WTC11 (cell line): ENCODE measurements at regions of chr4 and their contacts with region 1.

Region 1: DNA sequence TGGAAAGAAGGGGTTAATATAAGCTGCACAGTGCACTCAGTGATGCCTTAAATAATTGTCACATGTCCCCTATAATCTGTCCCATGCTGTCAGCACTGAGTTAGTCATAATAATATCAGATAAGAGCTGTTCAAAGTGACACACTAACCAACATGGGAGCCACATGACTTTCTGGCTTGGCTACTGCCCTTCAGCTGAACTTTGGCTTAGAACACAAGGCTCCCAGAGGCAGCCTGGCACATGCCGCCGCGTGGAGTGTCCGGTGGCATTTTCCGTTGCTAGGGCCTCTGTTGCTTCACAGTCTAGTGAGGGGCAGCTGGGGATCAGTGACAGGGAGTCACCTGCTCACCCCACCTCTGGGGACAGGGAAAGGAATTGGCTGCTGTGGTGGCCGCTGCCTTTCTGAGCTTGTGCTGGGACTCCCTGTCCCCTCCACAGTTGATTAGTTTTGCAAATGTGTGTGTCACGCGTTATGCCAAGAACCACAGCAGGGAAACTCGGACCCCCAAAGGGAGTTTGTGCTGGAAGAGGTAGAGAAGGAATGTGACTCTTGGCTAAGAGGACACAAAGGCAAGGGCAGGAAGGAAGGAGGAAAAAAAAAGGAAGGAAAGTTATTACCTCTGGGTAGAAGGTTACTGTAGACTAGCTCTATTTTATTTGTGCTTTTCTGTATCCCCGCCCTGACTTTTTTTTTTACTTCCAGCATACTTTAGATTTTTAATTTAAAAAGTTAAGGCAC is 41.1 kb upstream of the PPARGC1A start:
- DNase-seq: no peak
- ATAC-seq: no peak; the same call in 1 of the 2 replicates
- H3K4me3 Mint-ChIP-seq: 0 out of 2 replicates have a peak overlapping the region, but pooled peaks have one; percentile 9
- H3K27ac Mint-ChIP-seq: peak overlapping the region; percentile 52
- H3K4me1 Mint-ChIP-seq: peaks cover 69% of the 10 kb centered on the region
- H3K27me3 Mint-ChIP-seq: peaks cover 3% of the 10 kb centered on the region; the same call in 1 of the 2 replicates
- CTCF ChIP-seq: no peak

Region 2: DNA sequence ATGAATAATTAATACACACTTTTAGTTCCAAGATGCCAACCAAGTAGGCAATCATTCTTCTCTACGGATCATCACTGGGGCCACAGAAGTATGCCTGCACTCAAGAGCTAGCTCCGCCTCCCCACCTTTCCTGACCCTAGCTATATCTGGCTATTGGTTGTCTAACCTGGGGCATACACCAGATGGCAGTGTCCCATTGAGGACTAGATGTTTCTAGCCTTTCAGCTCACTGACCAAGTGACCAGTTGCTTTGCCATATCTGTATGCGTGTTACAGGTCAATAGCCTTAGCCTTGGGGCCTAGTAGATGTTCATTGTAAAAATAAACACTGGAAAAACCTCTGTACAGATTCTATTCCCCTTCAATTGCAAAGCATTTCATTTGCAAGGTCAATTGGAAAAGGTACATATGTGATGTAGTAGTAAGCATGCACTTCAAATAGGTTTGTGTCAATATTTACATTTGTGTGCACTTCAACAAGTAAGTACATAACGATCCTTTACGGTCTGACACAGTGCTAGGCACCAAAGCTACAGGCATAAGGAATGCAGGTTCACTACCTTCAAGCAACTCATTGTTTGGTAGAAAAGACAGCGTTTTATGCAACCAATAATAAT is 562.7 kb before region 1 on chr4:
- CTCF ChIA-PET with region 1: interaction called, 16 read pairs
- POLR2A ChIA-PET with region 1: no interaction called
- DNase-seq: peak; percentile 72
- ATAC-seq: peak; percentile 97
- H3K4me3 Mint-ChIP-seq: no peak overlapping the region
- H3K27ac Mint-ChIP-seq: no peak overlapping the region
- H3K4me1 Mint-ChIP-seq: peaks cover 16% of the 10 kb centered on the region
- H3K27me3 Mint-ChIP-seq: peaks cover 23% of the 10 kb centered on the region
- CTCF ChIP-seq: peak; percentile 56

Region 3: DNA sequence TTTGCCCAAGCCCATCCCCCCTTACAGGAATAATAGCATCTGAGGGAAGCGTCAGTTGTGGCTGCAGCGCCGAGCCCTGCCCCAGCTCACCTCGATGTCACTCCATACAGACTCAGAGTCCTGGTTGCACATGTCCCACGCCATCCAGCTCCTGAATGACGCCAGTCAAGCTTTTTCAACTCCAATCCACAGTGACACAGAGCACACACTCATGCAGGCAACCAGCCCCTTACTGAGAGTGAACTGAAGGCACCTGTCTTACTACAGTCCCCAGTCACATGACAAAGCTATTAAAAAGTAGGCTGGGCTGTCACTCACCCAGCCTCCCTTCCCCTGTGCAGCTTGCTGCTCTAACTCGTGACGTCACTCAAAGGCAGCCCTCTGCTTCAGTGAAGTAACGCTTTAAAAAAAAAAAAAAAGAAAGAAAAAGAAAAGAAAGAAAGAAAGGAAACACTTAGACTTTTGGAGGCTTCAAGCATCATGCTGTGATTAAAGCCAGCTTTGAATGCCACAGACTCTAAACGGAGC is 41.0 kb before region 1 on chr4 and contains the start of gene PPARGC1A:
- CTCF ChIA-PET with region 1: interaction called, 24 read pairs
- POLR2A ChIA-PET with region 1: no interaction called
- DNase-seq: no peak
- ATAC-seq: peak; percentile 40
- H3K4me3 Mint-ChIP-seq: peak within 1 kb of the TSS; percentile 53
- H3K27ac Mint-ChIP-seq: no peak within 1 kb of the TSS
- H3K4me1 Mint-ChIP-seq: peaks cover 64% of the 10 kb centered on the region
- H3K27me3 Mint-ChIP-seq: peaks cover 15% of the 10 kb centered on the region
- CTCF ChIP-seq: no peak
- total RNA-seq, gene PPARGC1A: 1.9 to 2.9 TPM (median 2.0 TPM) in 3 replicates

Region 4: GRCh38 chr4:23946299-23946698 is 15.4 kb after region 1 on chr4:
- CTCF ChIA-PET with region 1: interaction called, 17 read pairs
- POLR2A ChIA-PET with region 1: no interaction called
- DNase-seq: no peak
- ATAC-seq: no peak
- H3K4me3 Mint-ChIP-seq: no peak overlapping the region
- H3K27ac Mint-ChIP-seq: no peak overlapping the region
- H3K4me1 Mint-ChIP-seq: peaks cover 26% of the 10 kb centered on the region
- H3K27me3 Mint-ChIP-seq: no peaks in the 10 kb centered on the region
- CTCF ChIP-seq: no peak

Region 5: DNA sequence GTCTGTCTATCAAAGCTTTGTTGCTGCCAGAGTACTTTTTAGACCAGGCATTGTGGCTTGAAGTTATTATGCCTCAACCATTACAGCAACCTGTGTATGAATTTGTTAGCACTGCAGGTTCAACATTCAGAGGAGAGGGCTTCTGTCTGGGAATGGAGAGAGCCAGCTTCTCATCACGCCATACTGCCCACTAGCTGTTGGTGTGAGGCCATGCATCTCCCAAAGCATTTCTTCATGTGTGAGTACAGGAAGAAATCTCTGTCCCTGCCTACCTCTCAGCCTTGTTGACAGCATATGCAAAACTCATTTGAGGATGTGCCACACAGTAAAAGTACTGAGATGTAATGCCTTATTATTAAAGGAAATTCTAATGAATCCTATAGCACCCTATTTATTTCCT is 35.8 kb after region 1 on chr4:
- CTCF ChIA-PET with region 1: interaction called, 37 read pairs
- POLR2A ChIA-PET with region 1: no interaction called
- DNase-seq: peak; percentile 32
- ATAC-seq: peak; percentile 89
- H3K4me3 Mint-ChIP-seq: no peak overlapping the region
- H3K27ac Mint-ChIP-seq: no peak overlapping the region
- H3K4me1 Mint-ChIP-seq: peaks cover 27% of the 10 kb centered on the region
- H3K27me3 Mint-ChIP-seq: no peaks in the 10 kb centered on the region
- CTCF ChIP-seq: peak; percentile 34; the same call in 1 of the 2 replicates

Region 6: DNA sequence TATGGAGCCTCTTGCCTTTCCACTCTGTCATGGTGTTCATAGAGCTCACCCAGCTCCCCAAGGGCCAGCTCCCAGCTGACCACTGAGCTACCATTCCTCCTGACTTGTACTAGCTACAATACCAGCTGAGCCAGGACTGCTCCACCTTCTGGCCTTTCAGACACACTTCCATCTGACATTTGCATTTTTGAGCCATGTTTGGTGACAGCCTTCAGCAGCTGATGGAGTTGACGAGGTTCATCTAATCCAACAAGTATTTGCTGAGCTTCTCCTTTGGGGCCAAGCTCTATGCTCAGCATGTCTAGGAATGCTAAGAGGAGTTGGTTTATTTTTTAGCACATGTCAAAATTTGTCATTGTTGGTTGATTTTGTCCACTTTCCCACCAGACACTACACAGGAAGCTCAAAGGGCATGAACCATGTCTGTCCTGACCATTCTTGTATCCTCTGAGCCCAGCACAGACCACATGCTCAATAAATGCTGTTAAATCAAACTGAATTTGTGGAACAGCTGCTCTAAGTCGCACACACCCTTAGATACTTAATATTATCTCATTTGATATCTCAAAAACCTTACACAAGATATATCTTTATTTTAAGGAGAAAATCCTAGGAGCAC is 101.6 kb after region 1 on chr4:
- CTCF ChIA-PET with region 1: interaction called, 34 read pairs
- POLR2A ChIA-PET with region 1: no interaction called
- DNase-seq: peak; percentile 16
- ATAC-seq: peak; percentile 83
- H3K4me3 Mint-ChIP-seq: no peak overlapping the region
- H3K27ac Mint-ChIP-seq: no peak overlapping the region
- H3K4me1 Mint-ChIP-seq: peaks cover 28% of the 10 kb centered on the region
- H3K27me3 Mint-ChIP-seq: no peaks in the 10 kb centered on the region
- CTCF ChIP-seq: no peak